Transverse colon (tissue), 4 donors: ENCODE measurements at regions of chr19 and their contacts with region 1.

Region 1: GRCh38 chr19:18588611-18589379 is at the start of gene REX1BD:
- DNase-seq: peak; percentile 84
- H3K4me3 ChIP-seq: peak within 1 kb of the TSS; percentile 49 to 86 (median 80)
- H3K27ac ChIP-seq: peak within 1 kb of the TSS; percentile 86 to 98 (median 95)
- H3K4me1 ChIP-seq: peaks cover 5 to 24% (median 14%) of the 10 kb centered on the region in 4 donors
- H3K27me3 ChIP-seq: no peaks in the 10 kb centered on the region
- CTCF ChIP-seq: peak; percentile 85 to 89 (median 89)
- EP300 ChIP-seq: no peak
- POLR2A ChIP-seq: peak; percentile 47
- total RNA-seq, gene REX1BD: 75.1 to 171 (median 121) TPM

Region 2: DNA sequence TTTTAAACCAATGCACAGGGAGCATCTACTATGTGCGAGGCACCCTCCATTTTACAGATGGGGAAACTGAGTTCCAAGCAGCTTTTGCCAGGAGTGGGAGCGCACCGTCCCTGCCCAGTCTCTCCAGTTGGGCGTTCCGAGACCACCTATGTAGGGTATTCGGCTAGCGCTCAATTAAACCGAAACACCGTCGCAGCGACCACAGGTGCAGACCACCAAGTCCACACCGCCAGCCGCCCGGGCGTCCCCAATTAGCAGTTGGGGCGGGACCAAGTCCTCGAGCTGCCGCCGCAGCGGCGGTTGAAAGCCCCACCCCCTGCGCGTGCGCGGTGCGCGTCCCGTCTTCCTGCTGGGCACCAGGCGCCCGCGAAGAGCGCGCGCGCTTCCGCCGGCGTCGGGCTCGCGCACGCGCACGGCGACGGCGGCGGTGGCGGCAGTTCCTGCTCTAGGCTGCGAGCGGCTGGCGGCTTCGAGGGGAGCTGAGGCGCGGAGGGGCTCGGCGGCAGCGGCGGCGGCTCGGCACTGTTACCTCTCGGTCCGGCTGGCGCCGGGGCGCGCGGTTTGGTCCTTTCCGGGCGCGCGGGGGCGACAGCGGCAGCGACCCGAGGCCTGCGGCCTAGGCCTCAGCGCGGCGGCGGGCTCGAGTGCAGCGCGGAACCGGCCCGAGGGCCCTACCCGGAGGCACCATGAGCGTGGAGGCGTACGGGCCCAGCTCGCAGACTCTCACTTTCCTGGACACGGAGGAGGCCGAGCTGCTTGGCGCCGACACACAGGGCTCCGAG is 242.9 kb after region 1 on chr19 and contains the start of gene UPF1:
- in situ Hi-C with region 1: loop called in 2 of 4 experiments (anchors 25 kb)
- intact Hi-C with region 1: no loop called
- DNase-seq: peak; percentile 96
- H3K4me3 ChIP-seq: peak within 1 kb of the TSS; percentile 83 to 94 (median 94)
- H3K27ac ChIP-seq: peak within 1 kb of the TSS; percentile 93 to 97 (median 94)
- H3K4me1 ChIP-seq: peaks cover 7 to 45% (median 38%) of the 10 kb centered on the region in 4 donors
- H3K27me3 ChIP-seq: peaks cover 4% of the 10 kb centered on the region
- CTCF ChIP-seq: peak in 1 of 5 experiments; percentile 8
- EP300 ChIP-seq: no peak
- POLR2A ChIP-seq: peak; percentile 18
- total RNA-seq, gene UPF1: 84.2 to 153 (median 91.9) TPM

Region 3: DNA sequence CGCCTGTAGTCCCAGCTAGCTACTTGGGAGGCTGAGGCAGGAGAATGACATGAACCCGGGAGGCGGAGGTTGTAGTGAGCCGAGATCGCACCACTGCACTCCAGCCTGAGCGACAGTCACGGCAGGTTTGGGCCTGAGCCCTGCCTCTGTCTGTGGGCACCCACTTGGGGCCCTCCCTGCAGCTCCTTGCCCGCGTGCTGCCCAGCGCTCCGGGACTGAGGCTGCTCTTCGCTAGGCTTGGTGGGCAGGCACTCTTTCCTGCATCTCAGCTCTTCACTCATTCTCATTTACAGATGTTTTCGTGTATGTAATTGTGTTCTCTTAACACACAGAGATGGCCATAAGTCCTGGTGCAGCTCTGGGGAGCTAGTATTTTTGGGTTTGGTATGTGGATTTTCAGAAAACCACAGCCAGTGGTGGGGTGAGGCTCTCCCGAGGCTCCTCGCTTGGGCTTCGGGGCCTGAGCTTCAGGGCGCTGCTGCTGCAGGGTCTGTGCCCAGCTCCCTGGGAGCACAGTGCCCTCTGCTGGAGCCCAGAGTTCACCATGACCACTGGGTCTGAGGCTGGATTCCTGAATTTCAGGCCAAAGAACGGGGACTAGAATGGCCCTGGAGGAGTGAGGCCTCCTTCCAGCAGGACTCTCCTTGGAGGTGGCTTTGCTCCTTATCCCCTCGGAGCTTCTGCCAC is 258.2 kb after region 1 on chr19:
- in situ Hi-C with region 1: loop called in 3 of 4 experiments (anchors 10 to 25 kb)
- intact Hi-C with region 1: loop called (anchors 5 kb)
- DNase-seq: peak; percentile 80
- H3K4me3 ChIP-seq: no peak overlapping the region
- H3K27ac ChIP-seq: peak overlapping the region; percentile 39 to 78 (median 69)
- H3K4me1 ChIP-seq: peaks cover 20 to 50% (median 40%) of the 10 kb centered on the region in 4 donors
- H3K27me3 ChIP-seq: no peaks in the 10 kb centered on the region
- CTCF ChIP-seq: peak; percentile 68 to 82 (median 77)
- EP300 ChIP-seq: no peak
- POLR2A ChIP-seq: no peak